ENCODE measurements at regions of chr3 and their contacts with region 1.

Region 1: GRCh38 chr3:183385698-183386613 is 42.5 kb downstream of the MCF2L2 start:
- DNase-seq: peak; percentile 75
- H3K4me3 ChIP-seq: no peak overlapping the region
- H3K27ac ChIP-seq: no peak overlapping the region
- H3K4me1 ChIP-seq: no peaks in the 10 kb centered on the region
- H3K27me3 ChIP-seq: no peaks in the 10 kb centered on the region
- CTCF ChIP-seq: peak; percentile 76

Region 2: DNA sequence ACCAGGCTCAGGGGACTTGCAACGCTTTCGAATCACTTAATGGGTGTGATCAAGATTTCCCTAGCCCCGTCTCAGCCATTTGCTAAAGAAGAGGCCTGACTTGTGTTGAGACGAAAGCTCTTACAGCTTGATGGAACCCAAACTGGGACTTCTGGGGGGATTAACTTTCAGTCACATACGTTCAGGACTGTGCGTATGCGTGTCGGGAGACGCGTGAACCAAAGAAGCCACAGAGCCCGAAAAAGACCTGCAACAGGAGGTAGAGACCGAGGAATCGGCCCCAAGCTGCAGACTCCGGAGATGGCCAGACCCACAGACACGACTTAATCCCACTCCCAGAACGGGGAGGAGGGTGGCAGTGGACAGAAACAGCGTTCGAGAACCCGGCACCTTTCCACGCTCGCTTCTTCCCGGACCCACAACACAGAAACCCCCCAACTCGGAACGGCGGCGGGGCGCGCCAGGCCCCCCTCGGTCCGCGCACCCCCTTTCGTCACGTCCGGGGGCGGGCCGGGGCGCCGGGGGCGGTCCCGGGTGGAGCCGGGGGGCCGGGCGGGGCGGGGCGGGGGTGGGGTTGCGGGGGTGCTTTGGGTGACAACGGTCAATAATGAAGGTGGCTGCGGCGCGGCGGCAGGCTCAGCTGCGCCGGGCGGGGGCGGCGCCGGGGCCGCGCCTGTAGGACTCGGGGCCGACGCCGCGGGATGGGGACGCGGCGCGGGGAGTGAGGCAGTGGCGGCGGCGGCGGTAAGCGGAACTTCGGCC is 592.9 kb before region 1 on chr3 and contains the start of gene ATP11B:
- CTCF ChIA-PET with region 1: no interaction called
- POLR2A ChIA-PET with region 1: no interaction called
- intact Hi-C with region 1: no loop called
- DNase-seq: peak; percentile 73
- H3K4me3 ChIP-seq: peak within 1 kb of the TSS; percentile 73
- H3K27ac ChIP-seq: peak within 1 kb of the TSS; percentile 89
- H3K4me1 ChIP-seq: peaks cover 13% of the 10 kb centered on the region
- H3K27me3 ChIP-seq: no peaks in the 10 kb centered on the region
- CTCF ChIP-seq: no peak
- total RNA-seq, gene ATP11B: 68.7 and 70.1 TPM in 2 replicates

Region 3: DNA sequence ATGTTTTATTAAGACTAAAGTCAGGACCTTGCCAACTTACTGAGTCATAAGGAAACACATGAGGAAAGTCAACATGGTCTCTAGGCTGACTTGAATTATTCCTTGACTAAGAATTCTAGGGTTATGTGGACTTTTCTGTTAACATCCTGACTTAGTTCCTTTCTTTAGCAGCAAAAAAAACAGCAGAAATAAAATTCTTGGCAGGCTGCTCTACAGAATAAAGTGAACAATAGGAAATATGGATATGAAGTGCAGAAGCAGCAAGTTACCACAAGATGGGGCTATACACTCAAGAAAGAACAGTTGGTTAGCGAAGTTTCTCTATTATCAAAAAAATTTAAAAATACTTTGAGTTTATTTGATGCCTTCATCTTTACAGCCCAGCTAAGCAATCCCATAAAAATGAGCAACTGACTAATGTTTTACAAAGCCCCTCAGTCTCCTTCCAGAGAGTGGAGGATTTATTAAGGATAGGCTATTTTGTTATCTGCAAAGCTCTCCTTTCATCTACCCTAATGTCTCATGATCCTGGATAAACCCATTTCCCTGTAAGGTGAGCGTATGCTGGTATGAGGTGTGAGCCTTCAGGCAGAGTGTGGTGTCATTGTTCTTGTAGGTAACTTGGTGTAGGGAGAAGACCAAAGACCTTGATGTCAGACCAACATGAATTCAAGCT is 263.6 kb before region 1 on chr3:
- CTCF ChIA-PET with region 1: interaction called, 7 read pairs
- POLR2A ChIA-PET with region 1: no interaction called
- intact Hi-C with region 1: loop called (anchors 1 kb)
- DNase-seq: peak; percentile 69
- H3K4me3 ChIP-seq: no peak overlapping the region
- H3K27ac ChIP-seq: no peak overlapping the region
- H3K4me1 ChIP-seq: peaks cover 4% of the 10 kb centered on the region
- H3K27me3 ChIP-seq: peaks cover 3% of the 10 kb centered on the region
- CTCF ChIP-seq: peak; percentile 88

Region 4: DNA sequence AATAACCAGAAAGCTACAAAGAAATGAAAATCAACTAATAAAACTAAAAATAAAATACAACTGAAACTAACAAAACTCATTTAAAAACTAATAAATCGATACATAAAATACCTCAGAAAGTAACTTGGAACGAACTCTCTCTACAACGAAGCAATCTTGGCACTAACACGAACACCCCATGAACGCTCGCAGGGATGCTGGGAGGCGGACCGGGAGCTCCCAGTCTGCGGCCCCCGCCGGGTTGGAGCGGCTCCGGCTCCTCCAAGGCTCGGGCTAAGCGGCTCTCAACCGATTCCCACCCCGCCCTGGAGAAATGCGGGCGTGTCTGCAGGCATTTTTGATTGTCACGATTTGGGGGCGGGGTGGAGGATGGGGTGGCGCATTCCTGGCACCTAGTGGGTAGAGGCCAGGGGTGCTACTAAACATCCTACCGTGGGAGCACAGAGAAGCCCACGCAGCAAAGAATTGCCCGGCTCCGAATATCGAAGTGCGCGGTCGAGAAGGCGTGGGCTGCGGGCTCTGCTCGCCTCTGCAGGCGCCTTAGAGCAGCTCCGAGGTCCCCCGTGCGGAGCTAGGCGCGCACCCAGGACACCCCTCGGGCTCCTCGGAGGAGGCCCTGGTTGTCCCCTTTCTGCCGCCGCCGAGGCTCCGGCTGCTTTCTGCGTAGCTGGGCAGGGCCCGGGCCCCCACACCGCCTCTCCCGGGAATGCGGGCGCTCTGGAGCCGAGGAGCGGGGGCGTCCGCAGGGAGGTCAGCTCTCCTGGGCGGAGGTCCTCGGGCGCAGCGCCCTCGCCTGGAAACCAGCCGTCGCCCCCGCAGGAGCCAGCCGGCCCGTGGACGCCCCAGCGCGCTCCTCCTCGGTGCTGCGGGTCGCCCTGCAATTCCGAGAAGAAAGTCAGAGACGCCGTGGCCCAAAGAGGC is 207.1 kb before region 1 on chr3:
- CTCF ChIA-PET with region 1: interaction called, 69 read pairs
- POLR2A ChIA-PET with region 1: no interaction called
- intact Hi-C with region 1: loop called (anchors 1 kb)
- DNase-seq: peak; percentile 72
- H3K4me3 ChIP-seq: peak overlapping the region; percentile 45
- H3K27ac ChIP-seq: no peak overlapping the region
- H3K4me1 ChIP-seq: no peaks in the 10 kb centered on the region
- H3K27me3 ChIP-seq: peaks cover 2% of the 10 kb centered on the region
- CTCF ChIP-seq: peak; percentile 28; the same call in 1 of the 2 replicates

Region 5: DNA sequence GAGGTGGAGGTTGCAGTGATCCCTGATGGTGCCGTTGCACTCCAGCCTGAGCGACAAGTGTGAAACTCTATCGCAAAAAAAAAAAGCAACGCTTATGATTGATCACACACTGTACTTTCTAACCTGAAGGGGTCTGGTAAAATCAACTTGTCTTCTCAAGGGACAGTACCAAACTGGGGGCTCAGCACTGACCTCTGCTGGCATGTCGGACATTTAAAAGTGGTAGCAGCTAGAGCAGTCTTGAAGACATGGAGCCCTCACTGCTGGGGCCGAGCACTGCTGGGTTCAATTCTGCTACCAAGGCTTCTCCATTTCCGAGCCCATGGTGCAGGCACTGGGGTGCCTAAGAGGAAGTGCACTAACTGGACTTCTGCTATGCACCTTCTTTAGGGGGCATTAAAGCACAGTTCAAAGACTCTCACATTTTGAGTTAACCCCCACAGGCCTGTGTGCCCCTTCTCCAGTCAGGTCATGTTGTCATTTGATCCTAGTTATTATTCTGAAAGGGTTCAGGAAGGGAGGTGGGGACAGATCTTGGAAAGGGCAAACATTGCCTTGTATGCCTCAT is 197.0 kb before region 1 on chr3:
- CTCF ChIA-PET with region 1: interaction called, 69 read pairs
- POLR2A ChIA-PET with region 1: no interaction called
- intact Hi-C with region 1: loop called (anchors 1 kb)
- DNase-seq: peak; percentile 45
- H3K4me3 ChIP-seq: no peak overlapping the region
- H3K27ac ChIP-seq: no peak overlapping the region
- H3K4me1 ChIP-seq: peaks cover 6% of the 10 kb centered on the region
- H3K27me3 ChIP-seq: no peaks in the 10 kb centered on the region
- CTCF ChIP-seq: peak; percentile 52

Region 6: GRCh38 chr3:183349421-183350157 is 36.4 kb before region 1 on chr3:
- CTCF ChIA-PET with region 1: no interaction called
- POLR2A ChIA-PET with region 1: no interaction called
- intact Hi-C with region 1: no loop called
- DNase-seq: no peak
- H3K4me3 ChIP-seq: no peak overlapping the region
- H3K27ac ChIP-seq: no peak overlapping the region
- H3K4me1 ChIP-seq: no peaks in the 10 kb centered on the region
- H3K27me3 ChIP-seq: no peaks in the 10 kb centered on the region
- CTCF ChIP-seq: no peak